OCI-LY7 (cell line): ENCODE measurements at regions of chr14 and their contacts with region 1.

Region 1: GRCh38 chr14:103715052-103716000 is at the starts of genes XRCC3 and ZFYVE21:
- DNase-seq: peak; percentile 99
- H3K4me3 ChIP-seq: peak within 1 kb of the TSS; percentile 88
- H3K27ac ChIP-seq: peak within 1 kb of the TSS; percentile 60
- H3K4me1 ChIP-seq: peaks cover 57% of the 10 kb centered on the region
- CTCF ChIP-seq: no peak
- total RNA-seq, gene XRCC3: 83.6 and 130 TPM in 2 replicates
- total RNA-seq, gene ZFYVE21: 16.6 and 22.5 TPM in 2 replicates

Region 2: DNA sequence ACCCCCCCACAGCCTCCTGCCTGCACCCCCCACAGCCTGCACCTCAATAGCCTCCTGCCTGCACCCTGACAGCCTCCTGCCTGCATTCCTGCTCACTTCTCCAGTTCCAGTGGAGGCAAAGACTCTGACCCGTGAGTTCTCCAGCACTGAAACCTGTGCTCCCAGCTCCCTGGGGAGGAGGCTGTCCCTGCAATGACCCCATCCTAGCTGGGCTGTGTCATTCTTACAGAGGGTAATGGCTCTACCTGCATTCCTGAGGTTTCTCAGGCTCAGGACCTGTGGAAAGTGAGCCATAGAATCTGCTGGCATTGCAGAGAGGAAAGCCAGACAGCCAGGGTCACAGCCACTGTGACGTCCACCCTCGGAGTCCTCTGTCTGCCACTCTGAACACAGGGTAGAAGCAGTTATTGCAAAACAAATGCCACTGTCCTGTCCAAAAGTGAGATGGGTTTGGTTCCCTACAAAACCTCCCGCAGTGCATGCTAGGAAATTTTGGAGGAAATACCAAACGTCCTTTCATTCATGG is 554.4 kb before region 1 on chr14:
- CTCF ChIA-PET with region 1: no interaction called
- POLR2A ChIA-PET with region 1: no interaction called
- intact Hi-C with region 1: no loop called
- DNase-seq: no peak
- H3K4me3 ChIP-seq: no peak overlapping the region
- H3K27ac ChIP-seq: no peak overlapping the region
- H3K4me1 ChIP-seq: no peaks in the 10 kb centered on the region
- CTCF ChIP-seq: no peak

Region 3: DNA sequence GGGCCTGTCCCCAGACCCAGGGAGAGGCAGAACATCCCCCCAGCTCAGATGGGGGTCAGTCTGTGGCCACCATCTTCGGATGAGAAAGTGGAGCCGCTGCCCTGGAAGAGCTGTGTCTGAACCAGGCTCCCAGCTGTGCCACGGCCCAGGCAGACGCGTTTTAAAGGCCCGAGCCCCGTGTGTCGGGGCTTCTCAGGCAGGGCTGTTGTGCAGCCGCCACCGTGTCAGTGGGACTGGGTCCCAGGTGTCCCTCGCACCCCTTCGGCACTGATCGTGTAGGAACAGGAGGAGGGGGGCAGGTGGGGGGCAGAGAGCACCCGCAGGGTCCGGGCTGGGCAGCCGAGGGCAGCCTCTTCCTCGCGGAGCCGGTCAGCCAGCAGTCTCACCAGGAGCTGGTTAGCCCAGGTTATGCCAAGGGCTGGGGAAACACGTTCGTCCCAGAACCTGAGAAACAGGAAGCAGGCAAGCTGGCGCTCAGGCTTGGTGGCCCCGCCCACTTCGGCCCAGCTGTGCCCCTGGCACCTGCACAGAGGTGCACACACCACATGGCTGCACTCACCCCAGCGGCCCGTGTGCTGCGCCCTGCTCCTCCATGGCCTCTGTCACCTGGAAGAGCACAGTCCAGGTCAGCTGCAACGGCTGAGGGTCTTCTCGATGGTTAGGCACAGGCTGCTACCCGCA is 16.6 kb before region 1 on chr14:
- CTCF ChIA-PET with region 1: no interaction called
- POLR2A ChIA-PET with region 1: interaction called, 8 read pairs
- intact Hi-C with region 1: loop called (anchors 2 kb)
- DNase-seq: peak; percentile 84
- H3K4me3 ChIP-seq: peak overlapping the region; percentile 8
- H3K27ac ChIP-seq: peak overlapping the region; percentile 76
- H3K4me1 ChIP-seq: peaks cover 90% of the 10 kb centered on the region
- CTCF ChIP-seq: no peak

Region 4: DNA sequence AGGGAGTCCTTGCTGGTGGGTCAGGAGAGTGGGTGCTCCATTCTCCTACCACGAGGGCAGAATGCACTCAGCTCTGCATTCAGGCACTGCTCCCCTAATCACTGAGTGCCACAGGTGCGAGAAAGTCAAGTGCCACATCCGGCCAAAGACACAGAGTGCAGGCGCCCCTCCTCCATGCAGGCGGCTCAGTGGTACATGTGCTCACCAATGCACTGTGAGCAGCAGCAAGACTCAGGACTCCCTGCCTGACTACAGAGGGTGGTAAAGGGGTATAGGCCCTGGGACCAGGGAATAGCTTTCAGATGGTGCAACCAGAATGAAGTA is 33.2 kb after region 1 on chr14:
- CTCF ChIA-PET with region 1: no interaction called
- POLR2A ChIA-PET with region 1: interaction called, 4 read pairs
- intact Hi-C with region 1: loop called (anchors 2 kb)
- DNase-seq: peak; percentile 92
- H3K4me3 ChIP-seq: peak overlapping the region; percentile 8
- H3K27ac ChIP-seq: peak overlapping the region; percentile 56
- H3K4me1 ChIP-seq: peaks cover 46% of the 10 kb centered on the region
- CTCF ChIP-seq: 0 out of 2 replicates have a peak, but pooled peaks have one; percentile 32